Activated CD4-positive, alpha-beta memory T cell treated with anti-CD3 and anti-CD28 coated beads for 36 hours (primary cell): ENCODE measurements at regions of chr11 and their contacts with region 1.

Region 1: GRCh38 chr11:95705485-95706124 is 84.0 kb downstream of the FAM76B start:
- DNase-seq: peak; percentile 91
- H3K4me3 Mint-ChIP-seq: no peak overlapping the region
- H3K27ac Mint-ChIP-seq: no peak overlapping the region
- H3K4me1 Mint-ChIP-seq: peaks cover 13% of the 10 kb centered on the region
- H3K27me3 Mint-ChIP-seq: no peaks in the 10 kb centered on the region

Region 2: DNA sequence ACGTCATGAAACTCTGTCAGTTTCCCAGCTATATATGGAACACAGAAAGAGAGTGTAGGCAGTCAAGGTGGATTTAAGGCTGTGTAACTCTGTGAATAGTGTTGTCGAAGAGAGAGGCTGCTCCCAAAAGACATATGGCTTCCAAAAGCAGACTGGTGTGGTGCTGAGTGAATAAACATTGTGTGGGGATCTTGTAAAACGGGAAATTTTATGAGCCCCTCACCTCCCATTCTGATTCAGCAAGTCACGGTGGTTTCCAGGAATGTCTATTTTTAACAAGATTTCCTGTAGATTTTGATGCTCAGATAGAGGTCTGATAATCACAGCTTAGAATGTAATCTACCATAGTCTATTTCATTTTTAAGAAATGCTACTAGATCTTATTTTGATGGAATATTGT is 542.5 kb before region 1 on chr11:
- CTCF ChIA-PET with region 1: interaction called, 389 read pairs
- POLR2A ChIA-PET with region 1: no interaction called
- intact Hi-C with region 1: no loop called
- DNase-seq: no peak
- H3K4me3 Mint-ChIP-seq: no peak overlapping the region
- H3K27ac Mint-ChIP-seq: peak overlapping the region; percentile 73
- H3K4me1 Mint-ChIP-seq: peaks cover 27% of the 10 kb centered on the region
- H3K27me3 Mint-ChIP-seq: no peaks in the 10 kb centered on the region

Region 3: DNA sequence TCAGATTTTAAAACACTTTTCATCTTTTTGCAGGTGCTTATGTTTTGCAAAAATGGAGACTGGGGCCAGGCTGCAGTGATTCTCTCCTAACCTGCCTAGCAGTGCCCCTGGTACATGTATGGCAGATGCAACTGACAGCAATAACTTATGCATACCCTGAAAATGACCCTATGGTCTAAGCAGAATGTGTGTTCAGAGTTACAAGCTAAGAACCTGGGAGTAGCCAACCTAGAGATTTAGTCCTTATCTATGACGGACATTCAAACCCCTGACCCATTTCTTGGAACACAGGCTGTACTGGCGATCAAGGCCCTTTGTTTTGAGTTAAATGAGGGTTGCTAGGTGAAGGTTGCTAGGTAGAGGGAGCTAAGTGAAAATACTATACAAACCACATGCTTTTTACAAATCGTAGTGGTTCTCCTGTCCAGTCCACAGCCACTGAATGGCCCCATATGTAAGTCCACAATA is 289.7 kb before region 1 on chr11:
- CTCF ChIA-PET with region 1: no interaction called
- POLR2A ChIA-PET with region 1: no interaction called
- intact Hi-C with region 1: no loop called
- DNase-seq: no peak
- H3K4me3 Mint-ChIP-seq: no peak overlapping the region
- H3K27ac Mint-ChIP-seq: no peak overlapping the region
- H3K4me1 Mint-ChIP-seq: peaks cover 7% of the 10 kb centered on the region
- H3K27me3 Mint-ChIP-seq: no peaks in the 10 kb centered on the region

Region 4: GRCh38 chr11:95507794-95508193 is 197.8 kb before region 1 on chr11:
- CTCF ChIA-PET with region 1: interaction called, 11 read pairs
- POLR2A ChIA-PET with region 1: no interaction called
- intact Hi-C with region 1: loop called (anchors 2 kb)
- DNase-seq: peak; percentile 17
- H3K4me3 Mint-ChIP-seq: no peak overlapping the region
- H3K27ac Mint-ChIP-seq: no peak overlapping the region
- H3K4me1 Mint-ChIP-seq: peaks cover 5% of the 10 kb centered on the region
- H3K27me3 Mint-ChIP-seq: no peaks in the 10 kb centered on the region

Region 5: GRCh38 chr11:95556342-95557163 is 149.1 kb before region 1 on chr11:
- CTCF ChIA-PET with region 1: interaction called, 23 read pairs
- POLR2A ChIA-PET with region 1: interaction called, 11 read pairs
- intact Hi-C with region 1: loop called (anchors 1 kb)
- DNase-seq: peak; percentile 56
- H3K4me3 Mint-ChIP-seq: peak overlapping the region; percentile 38
- H3K27ac Mint-ChIP-seq: peak overlapping the region; percentile 90
- H3K4me1 Mint-ChIP-seq: peaks cover 27% of the 10 kb centered on the region
- H3K27me3 Mint-ChIP-seq: no peaks in the 10 kb centered on the region

Region 6: DNA sequence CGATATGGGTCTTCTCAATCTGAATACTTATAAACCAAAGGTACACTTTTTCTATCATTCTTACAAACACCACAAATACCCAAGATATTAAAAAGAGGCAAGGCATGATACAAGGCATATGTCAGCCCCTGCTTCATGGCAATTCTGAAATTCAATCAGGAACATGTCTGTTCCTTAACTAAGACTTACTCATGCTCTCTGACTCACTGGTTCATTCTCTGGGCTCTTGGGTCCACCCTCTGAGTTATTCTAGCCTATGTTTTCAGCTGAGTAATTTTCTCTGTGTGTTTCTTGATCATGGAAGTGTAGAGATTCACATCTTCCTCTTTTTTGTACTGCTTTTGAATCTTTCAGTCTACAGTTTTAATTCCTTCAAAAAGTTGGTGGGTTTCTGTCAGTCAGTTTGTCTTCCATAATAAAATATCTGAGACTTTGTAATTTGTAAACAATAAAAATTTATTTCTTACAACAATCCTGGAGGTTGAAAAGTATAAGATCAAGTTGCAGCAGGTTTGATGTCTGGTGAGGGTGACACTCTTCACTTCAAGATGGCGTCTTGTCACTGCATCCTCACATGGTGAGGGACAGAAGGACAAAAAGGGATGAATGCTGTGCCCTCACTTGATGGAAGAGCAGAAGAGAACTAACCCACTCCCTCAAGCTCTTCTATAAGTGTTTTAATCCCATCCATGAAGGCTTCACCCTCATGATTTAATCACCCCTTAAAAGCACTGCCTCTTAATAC is 127.7 kb before region 1 on chr11:
- CTCF ChIA-PET with region 1: interaction called, 10 read pairs
- POLR2A ChIA-PET with region 1: no interaction called
- intact Hi-C with region 1: no loop called
- DNase-seq: no peak
- H3K4me3 Mint-ChIP-seq: no peak overlapping the region
- H3K27ac Mint-ChIP-seq: no peak overlapping the region
- H3K4me1 Mint-ChIP-seq: peaks cover 13% of the 10 kb centered on the region
- H3K27me3 Mint-ChIP-seq: no peaks in the 10 kb centered on the region

Region 7: DNA sequence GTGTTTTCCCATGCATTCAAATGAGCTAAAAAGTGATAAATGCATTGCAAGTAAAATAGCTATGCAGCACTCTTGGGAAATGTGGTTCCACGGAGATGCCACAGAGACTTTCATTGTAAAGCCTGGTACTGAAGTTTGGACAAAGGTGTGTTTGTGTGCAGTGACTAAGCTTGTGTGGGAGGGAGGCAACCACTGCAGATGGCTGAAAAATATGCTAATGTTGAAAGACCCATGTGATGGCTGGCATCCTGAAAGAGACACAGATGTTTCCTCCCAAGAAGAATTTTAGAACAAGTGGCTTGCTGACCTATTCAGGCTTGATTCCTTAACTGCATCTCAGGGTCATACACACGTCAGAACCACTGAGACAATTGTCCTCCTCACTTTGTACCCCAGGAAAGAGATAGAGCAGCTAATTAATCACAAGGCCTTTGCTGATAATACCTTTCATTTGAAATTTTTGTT is 10.2 kb after region 1 on chr11:
- CTCF ChIA-PET with region 1: interaction called, 34 read pairs
- POLR2A ChIA-PET with region 1: no interaction called
- intact Hi-C with region 1: loop called (anchors 1 kb)
- DNase-seq: peak; percentile 71
- H3K4me3 Mint-ChIP-seq: no peak overlapping the region
- H3K27ac Mint-ChIP-seq: peak overlapping the region; percentile 43
- H3K4me1 Mint-ChIP-seq: peaks cover 59% of the 10 kb centered on the region
- H3K27me3 Mint-ChIP-seq: no peaks in the 10 kb centered on the region

Region 8: DNA sequence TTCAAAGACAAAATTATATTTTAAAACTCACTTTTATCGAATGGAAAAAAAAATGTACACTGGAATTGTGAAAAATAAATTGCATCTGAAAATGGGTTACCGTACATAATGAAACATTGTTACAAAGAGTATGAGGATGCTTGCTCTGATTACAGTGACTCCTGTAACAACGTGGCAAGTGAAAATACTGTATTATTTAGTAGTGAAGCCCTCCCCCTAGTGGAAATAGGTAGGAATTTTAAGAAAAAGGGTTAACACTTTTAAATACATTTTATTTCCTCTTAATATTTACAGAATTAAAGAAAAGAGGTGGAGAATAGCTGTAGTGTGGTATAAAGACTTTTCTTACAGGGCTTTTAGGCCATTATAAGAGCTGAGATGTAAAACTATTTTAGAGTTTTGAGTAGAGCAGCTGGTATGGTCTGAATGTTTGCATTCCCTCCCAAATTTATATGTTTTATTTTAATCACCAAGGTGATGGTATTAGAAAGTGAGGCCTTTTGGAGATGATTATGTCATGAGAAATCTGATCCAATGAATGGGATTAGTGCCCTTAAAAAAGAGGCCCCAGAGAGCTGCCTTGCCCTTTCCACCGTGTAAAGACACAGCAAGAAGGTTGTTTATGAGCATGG is 58.8 kb after region 1 on chr11:
- CTCF ChIA-PET with region 1: interaction called, 34 read pairs
- POLR2A ChIA-PET with region 1: no interaction called
- intact Hi-C with region 1: loop called (anchors 2 kb)
- DNase-seq: no peak
- H3K4me3 Mint-ChIP-seq: no peak overlapping the region
- H3K27ac Mint-ChIP-seq: no peak overlapping the region
- H3K4me1 Mint-ChIP-seq: no peaks in the 10 kb centered on the region
- H3K27me3 Mint-ChIP-seq: no peaks in the 10 kb centered on the region

Region 9: GRCh38 chr11:96012086-96012824 is 306.6 kb after region 1 on chr11:
- CTCF ChIA-PET with region 1: no interaction called
- POLR2A ChIA-PET with region 1: no interaction called
- intact Hi-C with region 1: no loop called
- DNase-seq: peak; percentile 59
- H3K4me3 Mint-ChIP-seq: peak overlapping the region; percentile 32
- H3K27ac Mint-ChIP-seq: peak overlapping the region; percentile 75
- H3K4me1 Mint-ChIP-seq: peaks cover 55% of the 10 kb centered on the region
- H3K27me3 Mint-ChIP-seq: no peaks in the 10 kb centered on the region